ENCODE measurements at regions of chr14 and their contacts with region 1.

Region 1: DNA sequence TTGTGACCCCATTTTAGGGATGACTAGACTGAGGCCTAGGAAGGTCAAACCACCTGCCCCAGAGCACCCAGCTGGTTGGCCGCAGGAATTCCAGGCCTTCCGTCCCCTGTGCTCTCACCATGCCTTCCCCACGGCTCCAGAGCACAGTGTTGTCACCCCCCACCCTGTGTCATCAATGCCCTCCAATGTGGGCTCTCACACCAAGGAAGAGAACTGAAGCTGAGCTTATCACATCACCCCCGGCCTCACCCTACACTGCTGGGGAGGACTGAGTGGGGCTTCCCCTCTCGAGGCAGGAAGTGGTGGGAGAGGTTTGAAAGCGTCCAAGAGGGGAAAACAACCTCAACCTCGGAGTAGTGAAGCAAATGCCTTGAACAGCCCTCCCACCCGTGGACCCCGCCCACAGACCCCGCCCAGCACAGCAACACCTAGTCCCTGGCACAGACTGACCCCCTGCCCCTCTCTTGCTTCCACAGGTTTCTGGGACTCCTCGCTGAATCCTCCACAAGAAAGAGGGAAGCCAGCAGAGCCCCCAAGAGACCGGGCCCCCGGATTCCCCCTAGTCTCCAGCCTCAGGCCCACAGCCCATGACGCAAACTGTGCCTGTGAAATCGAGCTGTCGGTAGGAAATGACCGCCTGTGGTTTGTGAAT is 97.2 kb downstream of the LGMN start:
- DNase-seq: peak; percentile 82 to 95 (median 85)
- H3K4me3 ChIP-seq: peak overlapping the region; percentile 47 to 58
- H3K4me3 Mint-ChIP-seq: peak overlapping the region; percentile 92 to 99 (median 98)
- H3K27ac ChIP-seq: peak overlapping the region; percentile 84
- H3K27ac Mint-ChIP-seq: peak overlapping the region; percentile 96 to 100 (median 99)
- H3K4me1 ChIP-seq: peaks cover 80% of the 10 kb centered on the region
- H3K4me1 Mint-ChIP-seq: peaks cover 51 to 94% (median 67%) of the 10 kb centered on the region in 4 donors
- H3K27me3 ChIP-seq: no peaks in the 10 kb centered on the region
- H3K27me3 Mint-ChIP-seq: no peaks in the 10 kb centered on the region

Region 2: DNA sequence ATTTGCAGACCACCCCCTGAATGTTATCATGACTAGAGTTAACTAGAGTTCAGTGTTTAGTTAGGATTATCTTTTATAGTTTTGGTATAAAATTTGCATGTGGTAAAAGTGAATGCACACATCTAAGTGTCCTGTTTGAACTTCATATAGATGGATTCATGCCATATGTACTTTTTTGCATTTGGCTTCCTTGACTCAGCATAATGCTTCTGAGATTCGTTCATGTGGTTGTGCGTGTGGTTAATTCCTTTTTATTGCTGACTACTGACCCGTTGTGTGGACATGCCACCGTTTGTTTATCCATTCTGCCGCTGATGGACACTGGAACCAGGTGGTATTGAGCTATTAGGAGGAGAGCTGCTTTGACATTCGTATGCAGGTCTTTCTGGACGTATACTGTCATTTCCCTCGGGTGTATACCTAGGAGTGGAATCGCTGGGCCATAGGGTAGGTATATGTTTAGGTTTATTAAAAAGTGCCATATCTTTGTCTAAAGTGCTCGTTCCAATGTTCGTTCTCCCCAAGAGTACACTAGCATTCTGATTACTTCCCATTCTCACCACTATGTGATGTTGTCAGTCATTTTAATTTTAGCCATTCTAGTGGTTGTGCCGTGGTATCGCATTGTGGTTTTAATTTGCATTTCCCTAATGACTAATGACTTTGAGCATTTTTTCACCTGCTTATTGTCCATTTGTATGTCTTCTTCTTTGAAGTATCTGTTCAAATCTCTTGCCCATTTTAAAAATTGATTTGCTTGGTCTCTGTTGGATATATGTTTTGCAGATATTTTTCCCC is 100.0 kb before region 1 on chr14:
- CTCF ChIA-PET with region 1: interaction called, 3 read pairs
- POLR2A ChIA-PET with region 1: interaction called, 19 read pairs
- intact Hi-C with region 1: no loop called
- DNase-seq: peak in 3 of 5 donors; percentile 18 to 28 (median 23)
- H3K4me3 ChIP-seq: no peak overlapping the region
- H3K4me3 Mint-ChIP-seq: no peak overlapping the region
- H3K27ac ChIP-seq: no peak overlapping the region
- H3K27ac Mint-ChIP-seq: peak overlapping the region in 1 of 7 donors; percentile 12
- H3K4me1 ChIP-seq: peaks cover 25% of the 10 kb centered on the region
- H3K4me1 Mint-ChIP-seq: peaks cover 15 to 37% (median 23%) of the 10 kb centered on the region in 4 donors
- H3K27me3 ChIP-seq: no peaks in the 10 kb centered on the region
- H3K27me3 Mint-ChIP-seq: no peaks in the 10 kb centered on the region